T-cell (primary cell): ENCODE measurements at regions of chr3 and their contacts with region 1.

Region 1: DNA sequence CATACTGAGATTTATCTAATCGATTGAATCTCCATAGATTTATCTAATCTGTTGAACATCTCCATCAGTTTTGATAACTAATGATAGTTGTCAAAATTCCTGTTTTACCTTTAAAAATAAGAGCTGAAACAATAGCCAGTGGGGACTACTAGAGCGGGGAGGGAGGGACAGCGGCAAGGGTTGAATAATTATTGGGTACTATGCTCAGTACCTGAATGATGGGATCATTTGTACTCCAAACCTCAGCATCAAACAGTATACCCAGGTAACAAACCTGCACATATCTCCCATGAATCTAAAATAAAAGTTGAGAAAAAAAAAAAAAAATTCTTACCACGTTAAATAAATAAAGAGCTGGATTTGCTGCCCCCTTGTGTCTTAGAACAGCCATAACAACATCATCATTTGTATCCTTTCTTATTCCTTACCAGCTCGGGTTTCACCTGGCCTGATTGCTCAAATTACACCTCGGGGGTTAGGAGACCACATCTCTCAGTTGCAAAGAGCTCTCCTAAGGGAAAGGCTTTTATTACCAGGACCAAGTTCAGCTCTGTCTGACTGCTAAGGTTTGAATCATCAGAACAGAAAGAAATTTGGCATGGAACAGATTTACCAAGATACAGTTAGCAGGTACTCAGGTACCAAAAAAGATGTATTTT is 25.7 kb upstream of the RPL39L start:
- DNase-seq: peak in 25 of 35 experiments; percentile 3 to 84 (median 25)
- ATAC-seq: peak; percentile 48 to 70 (median 60)
- H3K4me3 ChIP-seq: no peak overlapping the region
- H3K4me3 Mint-ChIP-seq: no peak overlapping the region
- H3K27ac ChIP-seq: no peak overlapping the region
- H3K27ac Mint-ChIP-seq: no peak overlapping the region
- H3K4me1 ChIP-seq: peaks cover 0 to 3% of the 10 kb centered on the region in 2 experiments
- H3K4me1 Mint-ChIP-seq: peaks cover 4 to 10% (median 9%) of the 10 kb centered on the region in 3 donors
- H3K27me3 ChIP-seq: no peaks in the 10 kb centered on the region
- H3K27me3 Mint-ChIP-seq: peaks cover 6 to 7% of the 10 kb centered on the region in 2 donors

Region 2: GRCh38 chr3:185865247-185865646 is 1299.8 kb before region 1 on chr3:
- CTCF ChIA-PET with region 1: interaction called in 1 of 2 experiments, 14 read pairs
- POLR2A ChIA-PET with region 1: no interaction called
- DNase-seq: no peak
- ATAC-seq: no peak
- H3K4me3 ChIP-seq: no peak overlapping the region
- H3K4me3 Mint-ChIP-seq: no peak overlapping the region
- H3K27ac ChIP-seq: no peak overlapping the region
- H3K27ac Mint-ChIP-seq: no peak overlapping the region
- H3K4me1 ChIP-seq: no peaks in the 10 kb centered on the region
- H3K4me1 Mint-ChIP-seq: no peaks in the 10 kb centered on the region
- H3K27me3 ChIP-seq: peaks cover 0 to 2% of the 10 kb centered on the region in 2 experiments
- H3K27me3 Mint-ChIP-seq: peaks cover 9 to 14% of the 10 kb centered on the region in 2 donors

Region 3: DNA sequence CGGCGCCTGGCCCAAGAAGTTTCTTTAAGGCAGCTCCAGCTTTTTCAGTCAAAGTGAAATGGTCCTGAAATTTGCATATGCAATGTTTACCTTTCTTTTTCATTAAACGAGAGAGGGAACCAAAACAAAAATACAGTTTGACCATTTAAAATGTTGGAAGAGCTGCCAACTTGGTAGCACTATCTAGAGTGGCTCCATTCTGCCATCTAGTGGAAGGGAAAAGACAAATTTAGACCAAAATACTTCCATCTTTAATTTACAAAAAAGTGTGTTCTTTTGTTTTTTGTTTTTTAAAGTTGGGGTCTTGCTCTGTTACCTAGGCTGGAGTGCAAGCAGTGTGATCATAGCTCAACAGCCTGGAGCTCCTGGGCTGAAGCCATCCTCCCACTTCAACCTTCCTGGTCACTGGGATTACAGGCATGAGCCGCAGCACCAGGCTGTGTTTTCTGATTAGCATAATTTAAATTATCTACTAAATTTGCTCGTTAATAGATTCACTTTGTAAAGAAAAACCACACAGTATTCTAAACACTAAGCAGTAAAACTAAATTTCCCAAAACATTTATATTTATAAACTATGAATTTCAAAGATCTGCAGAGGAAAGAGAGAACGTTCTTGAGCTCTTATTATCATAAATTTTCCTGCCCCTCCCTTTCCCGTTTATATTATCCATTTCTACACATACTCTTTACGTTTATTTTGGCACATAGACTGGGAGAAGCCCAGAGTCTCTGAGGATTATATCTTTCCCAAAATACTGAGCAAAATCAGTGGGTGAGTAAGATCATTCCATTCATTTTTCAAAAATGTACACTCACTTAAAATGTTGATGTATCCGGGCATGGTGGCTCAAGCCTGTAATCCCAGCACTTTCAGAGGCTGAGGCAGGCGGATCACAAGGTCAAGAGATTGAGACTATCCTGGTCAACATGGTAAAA is 343.3 kb before region 1 on chr3:
- CTCF ChIA-PET with region 1: interaction called in 1 of 2 experiments, 10 read pairs
- POLR2A ChIA-PET with region 1: no interaction called
- DNase-seq: peak in 2 of 35 experiments; percentile 14 to 77
- ATAC-seq: peak in 1 of 4 experiments; percentile 48
- H3K4me3 ChIP-seq: no peak overlapping the region
- H3K4me3 Mint-ChIP-seq: no peak overlapping the region
- H3K27ac ChIP-seq: no peak overlapping the region
- H3K27ac Mint-ChIP-seq: no peak overlapping the region
- H3K4me1 ChIP-seq: peaks cover 2 to 16% of the 10 kb centered on the region in 2 experiments
- H3K4me1 Mint-ChIP-seq: peaks cover 12 to 14% (median 12%) of the 10 kb centered on the region in 3 donors
- H3K27me3 ChIP-seq: peaks cover 0 to 25% of the 10 kb centered on the region in 2 experiments
- H3K27me3 Mint-ChIP-seq: peaks cover 18 to 22% of the 10 kb centered on the region in 2 donors

Region 4: DNA sequence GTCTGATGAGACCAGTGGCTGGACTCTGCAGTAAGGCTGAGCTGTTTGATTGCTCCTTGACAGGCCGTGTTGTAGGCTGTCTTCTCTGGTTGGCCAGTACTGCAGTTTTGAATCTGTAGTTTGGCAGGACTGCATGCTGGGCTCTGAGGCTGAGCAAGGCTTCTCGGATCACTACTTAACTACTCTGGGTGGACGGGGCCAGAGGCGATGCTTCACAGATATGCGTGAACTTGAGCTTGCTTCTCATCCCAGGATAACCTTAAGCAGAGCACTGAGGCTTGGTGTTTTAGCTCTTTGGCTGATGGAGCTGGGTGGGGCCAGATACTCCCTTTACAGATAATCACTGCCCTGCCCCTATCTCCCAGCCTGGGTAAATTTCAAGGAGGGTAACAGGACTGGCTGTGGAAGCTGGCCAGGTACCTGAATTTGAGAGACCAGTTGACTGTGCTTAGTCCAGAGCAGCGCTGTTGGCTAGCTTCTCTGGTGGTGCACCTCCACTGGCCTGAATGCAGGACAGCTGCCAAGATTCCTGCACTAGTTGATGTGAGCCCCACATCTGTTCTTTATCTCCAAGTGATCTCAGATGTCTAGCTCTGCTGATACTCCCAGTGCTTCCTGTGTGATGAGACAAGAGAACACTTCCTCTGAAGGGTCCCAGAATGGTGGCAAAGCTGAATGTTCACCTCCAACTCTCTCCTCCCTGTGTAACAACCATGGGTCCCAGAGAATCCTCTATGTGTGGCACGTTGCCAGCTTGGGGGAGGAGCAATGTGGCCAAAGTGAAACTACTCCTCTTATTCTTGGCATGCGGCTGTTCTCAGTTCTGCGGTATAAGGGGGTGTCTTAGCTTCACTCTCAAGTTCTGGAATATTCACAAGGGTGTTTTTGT is 63.6 kb before region 1 on chr3:
- CTCF ChIA-PET with region 1: interaction called, 4 to 18 read pairs
- POLR2A ChIA-PET with region 1: no interaction called
- DNase-seq: peak in 34 of 35 experiments; percentile 1 to 68 (median 42)
- ATAC-seq: peak; percentile 68 to 86 (median 80)
- H3K4me3 ChIP-seq: peak overlapping the region; percentile 19 to 42
- H3K4me3 Mint-ChIP-seq: peak overlapping the region; percentile 53 to 65 (median 64)
- H3K27ac ChIP-seq: peak overlapping the region; percentile 54
- H3K27ac Mint-ChIP-seq: peak overlapping the region; percentile 71 to 88
- H3K4me1 ChIP-seq: peaks cover 9 to 14% of the 10 kb centered on the region in 2 experiments
- H3K4me1 Mint-ChIP-seq: peaks cover 18 to 50% (median 30%) of the 10 kb centered on the region in 3 donors
- H3K27me3 ChIP-seq: no peaks in the 10 kb centered on the region
- H3K27me3 Mint-ChIP-seq: no peaks in the 10 kb centered on the region

Region 5: DNA sequence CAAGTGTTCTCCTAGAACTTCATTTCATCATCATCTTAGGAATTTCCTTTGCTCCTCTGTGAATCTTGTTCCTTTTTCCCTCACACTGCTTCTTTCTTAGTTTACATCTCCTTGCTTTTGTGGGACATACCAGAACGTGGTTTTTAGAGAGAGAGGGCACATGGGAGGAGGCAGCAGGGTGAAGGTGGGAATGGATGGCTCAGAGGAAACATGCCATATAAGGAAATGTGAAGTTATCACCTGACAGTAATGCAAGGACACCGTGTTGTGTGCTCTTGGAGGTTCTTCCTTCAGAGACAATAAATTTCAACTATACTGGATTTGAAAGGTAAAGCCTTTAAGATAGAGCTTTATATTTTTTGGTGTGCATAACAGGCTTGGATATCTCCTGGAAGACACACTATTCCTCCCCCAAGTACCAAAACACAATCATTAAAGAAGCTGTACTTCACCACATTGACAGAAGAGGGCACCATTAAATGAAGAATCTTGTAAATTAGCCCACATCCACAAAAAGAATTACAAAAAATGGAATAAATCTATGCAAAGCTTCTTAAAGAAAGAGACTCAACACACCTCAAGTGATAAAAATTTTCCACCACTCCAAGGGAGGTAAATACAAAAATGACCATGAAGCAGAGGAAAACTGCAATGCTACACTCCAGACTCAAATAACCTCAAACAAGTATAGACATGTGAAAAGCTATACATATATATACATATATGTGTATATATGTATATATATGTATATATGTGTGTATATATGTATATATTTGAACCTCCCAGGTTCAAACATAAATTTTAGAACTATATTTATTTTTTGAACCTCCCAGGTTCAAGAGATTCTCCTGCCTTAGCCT is 51.9 kb before region 1 on chr3:
- CTCF ChIA-PET with region 1: interaction called, 60 to 186 read pairs
- POLR2A ChIA-PET with region 1: interaction called in 1 of 2 experiments, 3 read pairs
- DNase-seq: peak in 2 of 35 experiments; percentile 31 to 71
- ATAC-seq: peak in 3 of 4 experiments; percentile 52 to 64 (median 58)
- H3K4me3 ChIP-seq: no peak overlapping the region
- H3K4me3 Mint-ChIP-seq: no peak overlapping the region
- H3K27ac ChIP-seq: no peak overlapping the region
- H3K27ac Mint-ChIP-seq: no peak overlapping the region
- H3K4me1 ChIP-seq: peaks cover 0 to 4% of the 10 kb centered on the region in 2 experiments
- H3K4me1 Mint-ChIP-seq: peaks cover 6 to 9% (median 6%) of the 10 kb centered on the region in 3 donors
- H3K27me3 ChIP-seq: no peaks in the 10 kb centered on the region
- H3K27me3 Mint-ChIP-seq: no peaks in the 10 kb centered on the region

Region 6: GRCh38 chr3:187139126-187139894 is 25.7 kb before region 1 on chr3 and contains the start of gene RPL39L:
- CTCF ChIA-PET with region 1: interaction called, 3 to 18 read pairs
- POLR2A ChIA-PET with region 1: no interaction called
- DNase-seq: peak; percentile 85 to 96 (median 90)
- ATAC-seq: peak; percentile 96 to 99 (median 97)
- H3K4me3 ChIP-seq: peak within 1 kb of the TSS; percentile 54 to 65
- H3K4me3 Mint-ChIP-seq: peak within 1 kb of the TSS; percentile 85 to 88 (median 85)
- H3K27ac ChIP-seq: peak within 1 kb of the TSS; percentile 84
- H3K27ac Mint-ChIP-seq: peak within 1 kb of the TSS; percentile 87 to 92
- H3K4me1 ChIP-seq: peaks cover 0 to 16% of the 10 kb centered on the region in 2 experiments
- H3K4me1 Mint-ChIP-seq: peaks cover 18 to 21% (median 20%) of the 10 kb centered on the region in 3 donors
- H3K27me3 ChIP-seq: no peaks in the 10 kb centered on the region
- H3K27me3 Mint-ChIP-seq: no peaks in the 10 kb centered on the region
- total RNA-seq, gene RPL39L: 0.85 to 3.8 (median 2.1) TPM

Region 7: GRCh38 chr3:187150599-187150998 is 14.4 kb before region 1 on chr3:
- CTCF ChIA-PET with region 1: interaction called, 6 to 36 read pairs
- POLR2A ChIA-PET with region 1: no interaction called
- DNase-seq: peak; percentile 18 to 71 (median 53)
- ATAC-seq: peak in 3 of 4 experiments; percentile 45 to 58 (median 55)
- H3K4me3 ChIP-seq: no peak overlapping the region
- H3K4me3 Mint-ChIP-seq: no peak overlapping the region
- H3K27ac ChIP-seq: no peak overlapping the region
- H3K27ac Mint-ChIP-seq: peak overlapping the region; percentile 13 to 28
- H3K4me1 ChIP-seq: peaks cover 0 to 5% of the 10 kb centered on the region in 2 experiments
- H3K4me1 Mint-ChIP-seq: peaks cover 7 to 14% (median 8%) of the 10 kb centered on the region in 3 donors
- H3K27me3 ChIP-seq: peaks cover 0 to 9% of the 10 kb centered on the region in 2 experiments
- H3K27me3 Mint-ChIP-seq: peaks cover 3 to 7% of the 10 kb centered on the region in 2 donors